ENCODE measurements at regions of chr17 and their contacts with region 1.

Region 1: DNA sequence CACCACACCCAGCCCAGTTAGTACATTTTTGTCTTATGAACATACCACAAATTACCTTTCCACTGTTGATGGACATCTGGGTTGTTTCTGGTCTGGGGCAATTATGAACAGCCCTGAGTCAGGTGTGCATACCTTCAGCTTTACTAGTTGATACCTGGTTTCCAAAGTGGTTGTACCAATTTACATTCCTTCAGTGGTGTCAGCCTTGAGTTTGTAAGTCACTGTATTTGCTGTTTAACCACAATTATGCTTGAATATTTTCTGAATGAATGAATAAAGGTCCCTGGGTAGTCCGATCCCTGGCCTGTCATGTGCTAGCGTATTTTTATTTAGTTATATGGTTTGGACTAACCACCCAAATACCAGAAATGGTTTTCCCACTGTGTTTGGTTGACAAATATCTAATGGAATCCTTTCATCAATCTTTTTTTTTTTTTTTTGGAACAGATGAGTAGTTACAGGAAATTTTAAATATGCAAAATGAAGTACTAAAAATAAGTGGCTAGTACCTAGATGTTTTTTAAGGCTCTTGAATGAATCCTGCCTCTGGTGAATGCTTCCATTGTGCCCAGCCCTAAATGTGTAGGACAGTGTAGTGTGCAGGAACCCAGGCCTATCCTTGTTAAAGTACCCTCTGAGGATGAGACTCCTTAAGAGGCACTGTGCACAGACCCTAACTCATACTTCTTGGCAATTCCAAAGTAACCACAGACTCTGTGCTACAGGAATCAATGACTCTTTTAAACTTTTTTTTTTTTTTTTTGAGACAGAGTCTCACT is 3.7 kb downstream of the DUSP14 start:
- DNase-seq: no peak
- H3K4me3 ChIP-seq: no peak overlapping the region
- H3K27ac ChIP-seq: no peak overlapping the region
- H3K4me1 ChIP-seq: peaks cover 8 to 14% (median 11%) of the 10 kb centered on the region in 4 experiments
- H3K27me3 ChIP-seq: peaks cover 0 to 3% (median 0%) of the 10 kb centered on the region in 4 experiments; a peak in 3 of 7 replicates
- CTCF ChIP-seq: no peak
- EP300 ChIP-seq: no peak
- POLR2A ChIP-seq: no peak
- RAD21 ChIP-seq: no peak

Region 2: DNA sequence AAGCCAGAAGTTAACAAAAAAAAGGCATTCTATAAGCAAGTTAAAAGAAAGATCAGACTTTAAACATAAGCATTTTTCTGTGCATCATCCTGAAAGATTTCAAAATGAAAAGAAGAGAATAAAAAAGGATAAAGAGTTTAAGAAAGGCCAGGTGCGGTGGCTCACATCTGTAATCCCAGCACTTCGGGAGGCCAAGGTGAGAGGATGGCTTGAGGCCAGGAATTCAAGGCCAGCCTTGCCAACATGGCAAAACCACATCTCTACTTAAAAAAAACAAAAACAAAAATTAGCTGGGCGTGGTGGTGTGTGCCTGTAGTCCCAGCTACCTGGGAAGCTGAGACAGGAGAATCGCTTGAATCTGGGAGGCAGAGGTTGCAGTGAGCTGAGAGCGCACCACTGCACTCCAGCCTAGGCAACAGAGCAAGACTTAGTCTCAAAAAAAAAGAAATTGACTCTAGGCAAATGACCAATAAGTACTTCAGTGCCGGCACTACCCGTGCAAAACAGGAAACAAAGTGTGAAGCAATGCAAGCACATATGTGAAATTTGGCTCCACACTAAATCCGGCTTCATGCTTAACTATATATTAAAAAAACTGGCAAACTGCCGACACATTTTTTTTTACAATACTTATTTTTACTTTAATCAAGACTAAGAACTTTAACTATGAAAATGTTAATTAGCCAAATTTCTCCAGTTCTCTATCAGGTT is 200.9 kb before region 1 on chr17:
- CTCF ChIA-PET with region 1: no interaction called
- POLR2A ChIA-PET with region 1: no interaction called
- DNase-seq: no peak
- H3K4me3 ChIP-seq: no peak overlapping the region
- H3K27ac ChIP-seq: no peak overlapping the region
- H3K4me1 ChIP-seq: peaks cover 3 to 14% (median 9%) of the 10 kb centered on the region in 4 experiments; a peak in 4 of 7 replicates
- H3K27me3 ChIP-seq: no peaks in the 10 kb centered on the region
- CTCF ChIP-seq: no peak
- EP300 ChIP-seq: no peak
- POLR2A ChIP-seq: no peak
- RAD21 ChIP-seq: no peak

Region 3: GRCh38 chr17:37506678-37507077 is 13.2 kb after region 1 on chr17:
- CTCF ChIA-PET with region 1: interaction called, 17 read pairs
- POLR2A ChIA-PET with region 1: interaction called, 8 read pairs
- DNase-seq: peak; percentile 47 to 82
- H3K4me3 ChIP-seq: no peak overlapping the region
- H3K27ac ChIP-seq: no peak overlapping the region
- H3K4me1 ChIP-seq: peaks cover 0 to 3% (median 0%) of the 10 kb centered on the region in 4 experiments; a peak in 3 of 7 replicates
- H3K27me3 ChIP-seq: no peaks in the 10 kb centered on the region
- CTCF ChIP-seq: peak; percentile 86 to 98 (median 86)
- EP300 ChIP-seq: no peak
- POLR2A ChIP-seq: no peak
- RAD21 ChIP-seq: peak; percentile 37 to 55; a peak in 3 of 4 replicates

Measured in H1 (cell line).